Left lung (tissue), 14 donors: ENCODE measurements at regions of chr4 and their contacts with region 1.

Region 1: DNA sequence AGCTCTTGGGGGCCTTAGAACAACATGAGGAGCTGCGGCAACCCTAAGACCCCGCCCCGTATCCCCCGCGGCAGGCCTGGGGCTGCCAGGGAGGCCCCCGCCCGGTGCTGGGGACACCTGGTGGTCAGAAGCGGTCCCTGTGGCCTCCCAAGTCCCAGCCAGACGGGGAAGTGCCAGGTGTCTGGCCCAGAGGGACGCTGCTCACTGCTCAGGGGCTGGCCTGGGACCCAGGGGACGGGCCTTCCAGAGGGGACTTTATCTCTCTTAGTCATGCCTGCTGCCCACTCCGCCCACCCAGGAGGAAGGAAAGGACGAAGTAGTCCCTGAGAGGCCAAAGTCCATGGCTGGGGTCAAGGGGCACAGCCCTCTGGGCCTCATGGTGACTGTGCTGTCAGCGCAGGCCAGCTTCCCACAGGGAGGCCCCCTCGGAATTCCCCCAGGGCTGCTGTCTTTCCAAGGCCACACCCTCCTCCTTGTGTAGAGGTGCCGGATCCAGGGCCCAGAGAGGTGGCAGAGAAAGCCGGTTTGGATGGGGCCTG is 31.0 kb upstream of the HTRA3 start:
- DNase-seq: peak in 1 of 4 donors; percentile 76
- ATAC-seq: no peak
- H3K4me3 ChIP-seq: no peak overlapping the region
- H3K27ac ChIP-seq: no peak overlapping the region
- H3K4me1 ChIP-seq: peaks cover 0 to 7% of the 10 kb centered on the region in 2 donors
- H3K27me3 ChIP-seq: no peaks in the 10 kb centered on the region
- CTCF ChIP-seq: peak in 1 of 2 donors; percentile 19

Region 2: DNA sequence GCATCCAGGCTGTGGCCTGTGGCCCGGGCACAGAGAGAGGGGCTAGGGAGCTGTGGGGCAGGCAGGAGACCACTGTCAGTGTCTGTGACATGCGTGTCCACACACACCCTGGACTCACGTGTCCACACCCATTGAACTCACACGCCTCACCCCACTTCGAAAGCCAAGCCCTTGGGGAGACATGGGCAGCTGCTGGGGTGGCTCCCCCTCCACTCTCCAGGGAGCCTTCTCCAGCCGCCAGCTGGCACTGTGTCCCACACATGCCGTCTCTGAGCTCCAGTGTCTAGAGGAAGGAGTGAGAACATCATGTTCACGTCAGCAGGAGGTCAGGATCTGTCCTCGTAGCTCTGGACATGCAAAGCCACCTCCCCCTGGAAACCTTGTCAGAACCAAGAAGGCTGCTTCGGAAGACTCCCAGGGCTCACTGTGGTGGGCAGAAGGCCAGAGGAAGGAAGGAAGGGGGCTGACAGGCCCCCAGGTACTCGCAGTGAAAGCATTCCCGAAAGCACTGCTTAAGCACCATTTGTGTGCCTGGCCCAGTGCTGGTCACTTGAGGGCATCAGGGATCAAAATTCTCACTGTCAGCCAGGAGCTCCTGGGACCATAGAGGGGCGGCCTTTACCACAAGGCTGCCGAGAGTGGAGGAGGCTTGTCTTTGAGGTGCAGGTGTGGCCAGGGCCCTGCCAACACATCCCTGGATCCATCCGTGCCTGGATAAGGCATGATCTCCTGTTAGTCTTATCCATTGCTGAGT is 92.4 kb after region 1 on chr4:
- intact Hi-C with region 1: no loop called
- DNase-seq: peak in 2 of 4 donors; percentile 32 to 44
- ATAC-seq: no peak
- H3K4me3 ChIP-seq: no peak overlapping the region
- H3K27ac ChIP-seq: no peak overlapping the region
- H3K4me1 ChIP-seq: no peaks in the 10 kb centered on the region
- H3K27me3 ChIP-seq: no peaks in the 10 kb centered on the region
- CTCF ChIP-seq: no peak

Region 3: GRCh38 chr4:8403173-8403753 is 164.7 kb after region 1 on chr4:
- intact Hi-C with region 1: loop called (anchors 5 to 10 kb)
- DNase-seq: peak; percentile 63 to 93 (median 80)
- ATAC-seq: peak; percentile 93
- H3K4me3 ChIP-seq: no peak overlapping the region
- H3K27ac ChIP-seq: peak overlapping the region in 1 of 2 donors; percentile 51
- H3K4me1 ChIP-seq: peaks cover 0 to 22% of the 10 kb centered on the region in 2 donors
- H3K27me3 ChIP-seq: no peaks in the 10 kb centered on the region
- CTCF ChIP-seq: peak; percentile 87 to 97